ENCODE measurements at regions of chr15 and their contacts with region 1.

Region 1: GRCh38 chr15:74631408-74632247 is 16.0 kb downstream of the CLK3 start:
- DNase-seq: peak; percentile 47 to 59
- H3K4me3 ChIP-seq: no peak overlapping the region
- H3K27ac ChIP-seq: no peak overlapping the region
- H3K4me1 ChIP-seq: no peaks in the 10 kb centered on the region
- H3K27me3 ChIP-seq: no peaks in the 10 kb centered on the region
- CTCF ChIP-seq: peak; percentile 61 to 71 (median 64)
- POLR2A ChIP-seq: no peak

Region 2: DNA sequence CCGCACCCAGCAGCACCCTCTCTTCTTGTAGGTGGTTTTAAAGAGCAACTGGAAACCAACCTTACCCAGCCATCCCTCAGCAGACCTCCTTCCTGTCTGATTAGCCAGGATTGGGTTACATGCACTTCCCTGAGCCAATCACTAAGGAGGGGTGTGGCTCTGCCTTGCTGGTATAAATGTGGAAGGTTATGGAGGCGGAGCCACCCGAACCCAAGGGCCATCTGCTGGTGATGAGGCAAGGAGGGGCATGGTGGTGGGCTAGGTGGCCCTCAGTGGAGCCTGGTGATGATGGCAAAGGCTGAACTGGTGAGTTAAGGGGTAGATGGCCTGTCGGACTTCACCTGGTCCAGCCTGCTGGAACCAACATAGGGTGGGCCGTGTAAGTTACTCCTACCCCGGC is 355.7 kb before region 1 on chr15:
- intact Hi-C with region 1: no loop called
- DNase-seq: no peak
- H3K4me3 ChIP-seq: no peak overlapping the region
- H3K27ac ChIP-seq: no peak overlapping the region
- H3K4me1 ChIP-seq: no peaks in the 10 kb centered on the region
- H3K27me3 ChIP-seq: no peaks in the 10 kb centered on the region
- CTCF ChIP-seq: no peak
- POLR2A ChIP-seq: no peak

Region 3: GRCh38 chr15:74584779-74585178 is 46.8 kb before region 1 on chr15:
- intact Hi-C with region 1: no loop called
- DNase-seq: no peak
- H3K4me3 ChIP-seq: no peak overlapping the region
- H3K27ac ChIP-seq: no peak overlapping the region
- H3K4me1 ChIP-seq: no peaks in the 10 kb centered on the region
- H3K27me3 ChIP-seq: no peaks in the 10 kb centered on the region
- CTCF ChIP-seq: no peak
- POLR2A ChIP-seq: no peak

Region 4: GRCh38 chr15:74768771-74769342 is 137.2 kb after region 1 on chr15:
- intact Hi-C with region 1: loop called (anchors 5 kb)
- DNase-seq: peak; percentile 55 to 56
- H3K4me3 ChIP-seq: no peak overlapping the region
- H3K27ac ChIP-seq: no peak overlapping the region
- H3K4me1 ChIP-seq: no peaks in the 10 kb centered on the region
- H3K27me3 ChIP-seq: no peaks in the 10 kb centered on the region
- CTCF ChIP-seq: peak; percentile 76 to 90 (median 80)
- POLR2A ChIP-seq: no peak

Measured in uterus (tissue), 4 donors.